Cardiac septum (tissue), 1 donor: ENCODE measurements at regions of chr1 and their contacts with region 1.

Region 1: DNA sequence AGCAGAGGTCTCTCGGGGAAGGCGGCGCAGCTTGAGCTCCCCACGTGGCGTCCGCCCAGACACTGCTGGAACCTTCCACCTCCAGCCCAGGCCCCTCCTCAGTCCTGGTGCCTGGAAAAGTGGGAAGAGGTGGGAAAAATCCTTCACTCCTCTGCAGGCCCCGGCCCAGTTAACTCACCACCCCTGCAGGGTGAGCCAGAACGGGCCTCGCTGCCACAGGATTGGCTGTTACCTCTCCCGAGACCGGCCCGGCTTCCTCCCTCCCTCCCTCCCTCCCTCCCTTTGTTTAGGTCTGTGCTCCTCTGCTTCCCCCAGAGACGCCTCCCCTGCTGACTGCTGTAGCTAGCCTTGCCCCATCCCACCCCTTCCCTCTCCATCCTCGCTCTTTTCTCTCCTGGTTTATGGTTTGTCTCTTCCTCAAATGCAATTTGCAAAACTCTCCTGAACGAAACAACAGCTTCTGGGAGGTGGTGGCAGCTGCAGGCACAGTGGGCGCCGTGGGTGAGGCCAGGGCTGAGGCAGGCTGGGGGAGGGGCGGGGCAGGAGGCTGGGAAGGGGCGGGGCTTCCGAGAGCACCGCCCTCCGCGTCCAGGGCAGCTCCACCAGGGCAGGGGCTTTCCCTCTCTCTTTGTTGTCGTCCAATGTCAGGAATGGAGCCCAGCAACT is 6.5 kb downstream of the CAPN9 start:
- DNase-seq: no peak

Region 2: DNA sequence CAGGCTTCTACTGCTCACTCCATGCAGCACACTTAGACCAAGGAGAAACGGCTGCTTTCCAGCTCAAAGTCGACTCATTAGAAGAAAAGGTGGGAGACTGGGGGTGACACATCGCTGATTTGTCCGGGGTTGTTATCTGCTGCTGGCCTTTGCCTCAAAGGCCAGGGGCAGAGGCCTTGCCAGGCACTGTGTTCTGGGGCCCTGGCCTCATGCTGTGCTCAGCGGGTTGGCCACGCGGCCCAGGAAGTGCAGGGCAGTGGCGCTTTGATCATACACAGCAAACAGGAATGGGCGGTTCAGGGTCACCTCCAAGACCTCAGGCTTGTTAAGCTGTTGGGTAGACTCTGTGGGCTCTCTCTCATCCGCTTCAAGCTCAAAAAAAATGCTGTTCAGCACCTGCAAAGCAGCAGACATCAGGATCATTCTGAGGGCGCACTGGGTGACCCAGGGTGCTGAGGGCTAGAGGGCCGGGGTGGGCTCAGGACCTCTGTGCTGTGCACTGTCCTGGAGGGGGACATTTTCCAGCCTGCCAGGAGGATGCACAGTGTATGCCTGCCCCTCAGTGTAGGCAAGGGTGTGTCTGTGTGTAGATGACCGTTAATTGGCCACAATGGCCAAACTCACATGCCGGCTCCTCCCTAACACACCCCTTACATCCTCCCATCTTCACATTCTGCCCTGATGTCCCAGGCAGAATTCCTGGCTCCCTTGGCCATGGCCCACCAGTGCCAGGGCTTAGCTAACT is 50.6 kb before region 1 on chr1:
- intact Hi-C with region 1: no loop called
- DNase-seq: no peak

Region 3: DNA sequence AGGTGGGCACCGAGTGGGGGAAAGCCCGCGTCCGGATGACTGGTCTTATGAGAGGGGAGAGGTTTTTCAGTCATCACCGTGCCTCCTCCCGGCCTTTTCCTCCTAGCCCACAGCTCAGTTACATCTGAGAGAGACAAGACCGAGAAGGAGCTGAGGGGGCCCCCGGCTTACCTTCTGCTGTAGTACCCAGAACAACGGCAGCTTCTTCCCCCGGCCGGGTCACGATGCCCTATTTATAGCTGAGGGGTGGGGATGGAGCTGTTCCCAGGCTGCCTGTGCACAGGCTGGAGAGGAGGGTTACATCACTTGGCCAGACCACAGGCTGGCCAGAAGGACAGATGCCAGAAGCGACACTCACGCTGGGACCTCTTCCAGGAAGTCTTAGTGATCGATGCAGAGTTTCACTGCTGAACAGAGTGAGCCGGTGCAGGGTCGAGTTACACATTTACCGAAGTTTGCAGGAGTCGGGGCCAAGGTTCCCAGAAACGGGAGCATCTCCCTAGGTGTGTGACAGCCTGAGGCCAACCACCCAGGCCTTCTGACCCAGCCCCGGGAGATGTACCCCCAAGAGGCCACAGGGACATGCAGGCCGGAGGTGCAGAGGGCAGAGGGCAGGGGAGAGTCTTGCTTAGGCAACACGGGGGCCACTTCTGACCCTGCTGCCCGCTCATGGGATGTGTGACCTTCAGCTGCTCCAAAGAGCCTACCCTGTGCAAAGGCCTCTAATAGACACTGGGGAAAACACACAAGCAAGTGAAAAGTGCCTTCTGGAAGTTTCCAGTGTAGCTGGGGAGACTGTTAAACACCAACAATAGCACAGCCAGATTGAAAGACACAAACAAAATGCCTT is 39.6 kb before region 1 on chr1 and contains the start of gene AGT:
- intact Hi-C with region 1: loop called (anchors 5 kb)
- DNase-seq: peak; percentile 90
- total RNA-seq, gene AGT: 71.0 TPM

Region 4: DNA sequence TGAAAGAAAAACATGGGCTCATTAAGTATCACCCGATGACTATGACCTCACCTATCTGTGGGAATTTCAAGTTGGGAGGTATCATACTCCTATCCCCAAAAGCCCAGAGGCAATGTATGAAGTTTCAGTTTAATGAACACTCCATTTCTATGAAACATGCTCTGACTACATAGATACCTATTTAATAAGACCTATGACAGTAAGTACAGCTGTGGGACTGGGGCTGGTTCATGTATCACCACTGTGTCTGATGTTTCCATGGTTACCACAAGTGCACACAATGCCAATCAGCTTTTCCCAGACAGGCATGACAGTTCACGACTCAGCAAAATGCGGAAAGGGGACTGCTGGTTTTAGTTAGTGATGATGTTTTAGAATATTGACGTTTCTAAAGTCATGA is 1708.5 kb after region 1 on chr1:
- intact Hi-C with region 1: no loop called
- DNase-seq: no peak